ENCODE measurements at regions of chr1 and their contacts with region 1.

Region 1: DNA sequence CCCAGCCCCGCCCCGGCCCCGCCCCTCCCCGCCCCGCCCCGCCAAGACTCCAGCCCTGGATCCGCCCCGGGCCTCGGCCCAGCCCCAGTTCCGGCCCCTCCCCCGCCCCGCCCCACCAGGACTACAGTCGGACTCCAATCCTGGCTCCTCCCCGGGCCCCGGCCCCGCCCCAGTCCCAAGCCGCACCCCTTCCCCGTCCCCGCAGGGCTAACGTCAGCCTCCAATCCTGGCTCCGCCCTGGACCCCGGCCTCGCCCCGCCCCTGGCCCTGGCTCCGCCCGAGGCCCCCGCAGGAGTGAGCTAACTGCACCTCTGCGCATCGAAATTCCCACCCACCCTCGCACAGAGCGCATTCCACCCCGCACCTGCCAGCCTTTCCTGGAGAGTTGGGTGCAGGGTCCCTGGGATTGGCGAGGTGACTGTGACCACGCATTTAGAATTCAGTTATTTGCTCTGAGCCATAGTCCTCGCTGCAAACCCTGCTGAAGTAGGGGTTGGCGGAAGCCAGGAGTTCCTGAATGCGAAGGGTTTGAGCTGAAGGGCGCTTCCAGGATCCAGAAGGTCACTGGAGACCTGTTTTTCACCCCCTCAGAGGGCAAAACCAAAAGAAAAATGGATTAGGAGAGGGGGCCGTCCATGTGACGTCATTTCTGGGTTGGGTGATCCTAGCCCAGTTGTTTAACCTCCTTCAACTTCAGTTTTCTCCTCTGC is 588 bp upstream of the IGSF8 start:
- DNase-seq: peak; percentile 94 to 99 (median 98)
- ATAC-seq: peak; percentile 78 to 79
- H3K4me3 Mint-ChIP-seq: peak overlapping the region; percentile 74 to 97 (median 84)
- H3K27ac Mint-ChIP-seq: peak overlapping the region; percentile 88 to 100 (median 99)
- H3K4me1 Mint-ChIP-seq: peaks cover 39 to 86% (median 81%) of the 10 kb centered on the region in 4 donors
- H3K27me3 Mint-ChIP-seq: no peaks in the 10 kb centered on the region

Region 2: DNA sequence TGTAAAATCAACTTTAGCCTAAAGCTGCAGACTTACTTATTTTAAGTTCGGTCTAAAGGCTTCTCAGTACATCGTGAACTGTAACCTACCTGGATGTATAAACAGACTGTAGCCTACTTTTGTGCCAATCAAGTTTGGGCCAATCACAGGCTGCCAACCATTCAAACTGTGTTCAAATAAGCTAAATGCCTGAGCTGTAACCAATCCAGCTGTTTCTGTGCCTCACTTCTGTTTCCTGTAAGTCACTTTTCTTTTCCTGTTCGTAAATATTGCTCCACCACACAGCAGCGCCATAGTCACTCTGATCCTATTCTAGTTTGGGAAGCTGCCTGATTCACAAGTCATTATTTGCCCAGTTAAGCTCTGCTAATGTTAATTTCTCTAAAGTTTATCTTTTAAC is 107.5 kb before region 1 on chr1:
- POLR2A ChIA-PET with region 1: no interaction called
- DNase-seq: peak in 1 of 10 donors; percentile 5
- ATAC-seq: peak in 1 of 2 donors; percentile 79
- H3K4me3 Mint-ChIP-seq: no peak overlapping the region
- H3K27ac Mint-ChIP-seq: peak overlapping the region in 1 of 10 donors; percentile 24
- H3K4me1 Mint-ChIP-seq: peaks cover 3 to 6% (median 5%) of the 10 kb centered on the region in 4 donors
- H3K27me3 Mint-ChIP-seq: peaks cover 0 to 16% (median 8%) of the 10 kb centered on the region in 5 donors

Region 3: GRCh38 chr1:160085686-160086455 is 13.1 kb before region 1 on chr1:
- POLR2A ChIA-PET with region 1: interaction called, 49 read pairs
- DNase-seq: peak; percentile 63 to 86 (median 78)
- ATAC-seq: peak; percentile 58 to 68
- H3K4me3 Mint-ChIP-seq: peak overlapping the region in 4 of 10 donors; percentile 8 to 46 (median 24)
- H3K27ac Mint-ChIP-seq: peak overlapping the region in 9 of 10 donors; percentile 10 to 84 (median 81)
- H3K4me1 Mint-ChIP-seq: peaks cover 16 to 35% (median 20%) of the 10 kb centered on the region in 4 donors
- H3K27me3 Mint-ChIP-seq: peaks cover 4 to 20% (median 16%) of the 10 kb centered on the region in 5 donors

Region 4: DNA sequence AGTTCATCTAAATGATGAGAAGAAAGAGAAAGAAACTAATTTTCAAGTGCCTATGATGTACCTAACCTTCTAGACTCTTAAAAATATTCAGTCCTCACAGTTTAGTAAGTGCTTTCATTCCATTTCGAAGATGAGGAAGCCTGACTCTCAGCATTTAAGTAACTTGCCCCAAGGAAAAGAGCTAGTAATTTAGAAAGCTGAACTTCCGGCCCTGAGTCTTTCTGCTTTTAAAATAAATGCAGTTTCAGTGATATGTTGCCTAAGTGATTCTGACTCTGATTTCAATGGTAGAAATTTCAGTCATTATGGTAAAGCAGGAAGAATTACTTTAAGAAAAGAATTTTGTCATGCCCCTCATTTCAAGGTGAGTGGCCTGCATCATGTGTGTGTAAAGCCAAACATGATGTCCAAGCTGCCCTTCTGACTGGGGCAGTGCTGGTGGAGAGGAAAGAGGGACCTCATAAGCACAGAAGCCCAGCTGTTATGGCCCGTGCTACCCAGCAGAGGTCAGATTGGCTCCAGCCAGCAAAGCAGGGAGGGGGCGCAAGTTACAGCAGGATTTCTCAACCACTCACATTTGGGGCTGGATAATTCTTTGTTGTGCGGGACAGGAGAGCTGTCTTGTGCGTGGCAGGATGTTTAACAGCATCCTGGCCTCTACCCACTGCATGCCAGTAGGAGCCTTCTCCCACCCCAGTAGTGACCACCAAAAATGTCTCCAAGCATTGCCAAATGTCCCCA is 63.1 kb after region 1 on chr1:
- POLR2A ChIA-PET with region 1: no interaction called
- DNase-seq: no peak
- ATAC-seq: no peak
- H3K4me3 Mint-ChIP-seq: no peak overlapping the region
- H3K27ac Mint-ChIP-seq: no peak overlapping the region
- H3K4me1 Mint-ChIP-seq: peaks cover 0 to 6% (median 0%) of the 10 kb centered on the region in 4 donors
- H3K27me3 Mint-ChIP-seq: peaks cover 5 to 25% (median 10%) of the 10 kb centered on the region in 5 donors

Region 5: GRCh38 chr1:160284782-160285344 is 185.9 kb after region 1 on chr1 and contains the start of gene PEX19:
- POLR2A ChIA-PET with region 1: interaction called, 21 read pairs
- DNase-seq: peak; percentile 86 to 96 (median 92)
- ATAC-seq: peak; percentile 99 to 100
- H3K4me3 Mint-ChIP-seq: peak within 1 kb of the TSS; percentile 92 to 100 (median 98)
- H3K27ac Mint-ChIP-seq: peak within 1 kb of the TSS; percentile 91 to 98 (median 95)
- H3K4me1 Mint-ChIP-seq: peaks cover 17 to 34% (median 29%) of the 10 kb centered on the region in 4 donors
- H3K27me3 Mint-ChIP-seq: peaks cover 0 to 1% (median 0%) of the 10 kb centered on the region in 5 donors
- polyA plus RNA-seq, gene PEX19: 49.7 to 56.2 (median 53.1) TPM

Region 6: DNA sequence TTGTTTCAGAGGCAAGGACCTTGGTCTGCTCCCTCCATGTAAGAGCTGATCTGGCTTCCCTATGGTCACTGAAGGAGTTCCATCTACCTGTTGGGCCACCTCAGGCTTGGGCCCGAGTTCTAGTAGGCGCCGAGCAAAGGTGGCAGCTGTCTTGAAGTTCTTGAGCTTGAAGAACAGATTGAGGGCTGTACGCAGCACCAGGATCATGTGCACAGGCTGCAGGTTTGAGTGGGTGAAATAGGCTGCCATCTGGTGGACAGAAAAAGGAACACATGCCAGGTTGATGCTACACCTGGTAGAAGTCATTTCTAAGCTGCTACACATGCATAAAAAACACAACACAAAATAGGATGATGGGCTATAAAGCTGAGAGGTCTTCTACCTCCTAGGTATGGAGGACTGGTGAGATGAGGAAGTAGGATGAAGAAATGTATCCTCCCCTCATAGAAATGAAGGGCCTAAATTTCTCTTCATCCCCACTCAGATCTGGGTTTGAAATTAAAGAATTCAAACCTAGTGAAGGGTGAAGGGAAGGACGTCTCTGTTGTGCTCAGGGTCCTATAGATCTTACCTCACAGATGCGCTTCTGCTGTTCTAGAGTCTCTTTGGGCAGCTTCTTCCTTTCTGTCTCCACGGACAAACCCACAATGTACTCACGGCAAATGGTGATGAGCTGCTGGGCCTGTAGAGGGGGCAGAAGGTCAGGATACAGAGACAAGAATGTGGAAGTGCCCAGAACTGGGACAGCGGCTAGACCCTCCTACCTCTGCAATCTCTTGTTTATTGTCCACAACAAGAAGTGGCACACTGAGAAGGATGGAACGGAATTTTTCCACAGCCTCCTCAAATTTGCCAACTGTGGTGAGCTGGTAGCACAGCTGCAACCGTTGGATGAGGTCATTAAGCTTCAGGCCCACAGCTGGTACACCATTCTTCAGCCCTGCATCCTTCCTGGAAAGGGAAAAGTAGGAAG is 192.5 kb after region 1 on chr1:
- POLR2A ChIA-PET with region 1: interaction called, 25 read pairs
- DNase-seq: peak; percentile 20 to 85 (median 70)
- ATAC-seq: peak; percentile 99
- H3K4me3 Mint-ChIP-seq: no peak overlapping the region
- H3K27ac Mint-ChIP-seq: peak overlapping the region in 9 of 10 donors; percentile 10 to 91 (median 78)
- H3K4me1 Mint-ChIP-seq: peaks cover 2 to 7% (median 3%) of the 10 kb centered on the region in 4 donors
- H3K27me3 Mint-ChIP-seq: no peaks in the 10 kb centered on the region

Measured in naive thymus-derived CD8-positive, alpha-beta T cell (primary cell).